MCF 10A (cell line): ENCODE measurements at regions of chr7 and their contacts with region 1.

Region 1: DNA sequence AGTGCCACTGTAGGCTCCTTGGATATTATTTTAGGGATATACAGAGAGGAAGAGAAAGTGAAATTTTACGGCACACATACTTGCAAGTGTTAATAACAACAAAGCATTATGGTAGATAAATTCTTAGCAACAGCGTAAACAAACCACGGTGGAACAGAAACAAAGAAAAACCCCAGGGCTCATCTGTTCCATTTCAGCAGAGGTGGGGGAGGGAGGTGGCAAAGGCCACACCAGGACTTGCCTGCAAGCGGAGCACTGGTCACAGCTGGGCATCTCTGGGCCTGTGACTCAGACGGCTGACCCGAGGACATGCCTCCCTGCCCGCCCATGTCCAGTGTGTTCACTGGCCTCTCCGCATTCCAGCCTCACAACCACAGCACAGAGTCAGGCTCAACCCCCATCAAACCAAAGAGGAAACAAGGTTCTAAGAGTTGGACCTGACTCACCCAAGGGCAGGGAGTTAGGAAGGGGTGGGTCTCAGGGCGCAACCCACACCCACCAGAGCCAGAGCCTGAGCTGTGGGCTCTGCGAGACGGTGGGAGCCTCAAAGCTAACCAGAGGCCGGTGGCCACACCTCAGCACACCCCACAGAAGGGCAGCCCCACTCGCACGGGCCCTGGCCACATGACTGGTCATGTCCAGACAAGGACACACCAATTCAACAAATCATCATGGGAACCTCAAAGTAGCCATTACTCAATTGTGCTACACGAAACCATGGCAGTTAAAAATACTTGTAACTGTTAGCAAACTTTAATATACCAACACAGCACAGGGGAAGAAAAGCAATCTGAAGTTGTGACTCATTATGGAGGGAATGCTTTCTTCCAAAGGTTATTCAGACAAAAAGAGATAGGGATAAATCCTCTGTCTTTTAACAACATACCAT is 10.7 kb downstream of the ESYT2 start:
- DNase-seq: peak; percentile 97
- H3K4me3 Mint-ChIP-seq: peak overlapping the region; percentile 76
- H3K27ac Mint-ChIP-seq: peak overlapping the region; percentile 99
- H3K4me1 Mint-ChIP-seq: peaks cover 60% of the 10 kb centered on the region
- H3K27me3 Mint-ChIP-seq: no peaks in the 10 kb centered on the region
- CTCF ChIP-seq: no peak

Region 2: DNA sequence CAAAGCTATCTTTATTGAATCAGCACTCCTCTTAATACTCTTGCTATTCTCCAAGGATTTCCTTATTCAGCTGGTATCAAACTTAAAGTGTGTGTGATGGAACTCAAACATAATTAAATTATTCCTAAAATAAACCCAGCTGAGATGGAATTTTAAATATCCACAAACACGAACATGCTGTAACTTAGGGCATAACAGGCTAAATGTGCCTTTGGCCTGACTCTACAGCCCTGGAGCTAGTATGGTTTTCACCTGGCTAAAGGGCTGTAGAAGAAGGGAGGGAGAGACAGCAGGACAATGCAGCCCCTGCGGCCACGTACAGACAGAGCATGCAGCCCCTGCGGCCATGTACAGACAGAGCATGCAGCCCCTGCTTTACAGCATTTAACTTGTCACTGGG is 23.3 kb before region 1 on chr7:
- CTCF ChIA-PET with region 1: interaction called, 10 read pairs
- POLR2A ChIA-PET with region 1: interaction called, 4 read pairs
- intact Hi-C with region 1: no loop called
- DNase-seq: no peak
- H3K4me3 Mint-ChIP-seq: no peak overlapping the region
- H3K27ac Mint-ChIP-seq: no peak overlapping the region
- H3K4me1 Mint-ChIP-seq: no peaks in the 10 kb centered on the region
- H3K27me3 Mint-ChIP-seq: no peaks in the 10 kb centered on the region
- CTCF ChIP-seq: no peak

Region 3: GRCh38 chr7:158802473-158803202 is 15.9 kb before region 1 on chr7:
- CTCF ChIA-PET with region 1: interaction called, 5 read pairs
- POLR2A ChIA-PET with region 1: interaction called, 26 read pairs
- intact Hi-C with region 1: no loop called
- DNase-seq: no peak
- H3K4me3 Mint-ChIP-seq: peak overlapping the region; percentile 25
- H3K27ac Mint-ChIP-seq: peak overlapping the region; percentile 77
- H3K4me1 Mint-ChIP-seq: peaks cover 10% of the 10 kb centered on the region
- H3K27me3 Mint-ChIP-seq: no peaks in the 10 kb centered on the region
- CTCF ChIP-seq: no peak

Region 4: GRCh38 chr7:158856883-158857668 is 38.5 kb after region 1 on chr7:
- CTCF ChIA-PET with region 1: interaction called, 5 read pairs
- POLR2A ChIA-PET with region 1: interaction called, 13 read pairs
- intact Hi-C with region 1: loop called (anchors 5 kb)
- DNase-seq: no peak
- H3K4me3 Mint-ChIP-seq: peak overlapping the region; percentile 99
- H3K27ac Mint-ChIP-seq: peak overlapping the region; percentile 97
- H3K4me1 Mint-ChIP-seq: peaks cover 5% of the 10 kb centered on the region
- H3K27me3 Mint-ChIP-seq: no peaks in the 10 kb centered on the region
- CTCF ChIP-seq: no peak

Region 5: GRCh38 chr7:158863611-158864506 is 45.3 kb after region 1 on chr7:
- CTCF ChIA-PET with region 1: interaction called, 4 read pairs
- POLR2A ChIA-PET with region 1: interaction called, 21 read pairs
- intact Hi-C with region 1: loop called (anchors 5 kb)
- DNase-seq: peak; percentile 60
- H3K4me3 Mint-ChIP-seq: peak overlapping the region; percentile 77
- H3K27ac Mint-ChIP-seq: peak overlapping the region; percentile 92
- H3K4me1 Mint-ChIP-seq: peaks cover 14% of the 10 kb centered on the region
- H3K27me3 Mint-ChIP-seq: no peaks in the 10 kb centered on the region
- CTCF ChIP-seq: no peak